ENCODE measurements at regions of chr3 and their contacts with region 1.

Region 1: GRCh38 chr3:128075516-128076482 is 23.6 kb downstream of the SEC61A1 start:
- DNase-seq: peak; percentile 85 to 92
- ATAC-seq: peak; percentile 84 to 95 (median 92)
- H3K4me3 ChIP-seq: peak overlapping the region; percentile 38 to 63 (median 56)
- H3K27ac ChIP-seq: peak overlapping the region in 9 of 10 donors; percentile 33 to 65 (median 55)
- H3K4me1 ChIP-seq: peaks cover 6 to 68% (median 46%) of the 10 kb centered on the region in 9 donors
- H3K27me3 ChIP-seq: no peaks in the 10 kb centered on the region
- CTCF ChIP-seq: peak; percentile 94 to 99 (median 97)

Region 2: DNA sequence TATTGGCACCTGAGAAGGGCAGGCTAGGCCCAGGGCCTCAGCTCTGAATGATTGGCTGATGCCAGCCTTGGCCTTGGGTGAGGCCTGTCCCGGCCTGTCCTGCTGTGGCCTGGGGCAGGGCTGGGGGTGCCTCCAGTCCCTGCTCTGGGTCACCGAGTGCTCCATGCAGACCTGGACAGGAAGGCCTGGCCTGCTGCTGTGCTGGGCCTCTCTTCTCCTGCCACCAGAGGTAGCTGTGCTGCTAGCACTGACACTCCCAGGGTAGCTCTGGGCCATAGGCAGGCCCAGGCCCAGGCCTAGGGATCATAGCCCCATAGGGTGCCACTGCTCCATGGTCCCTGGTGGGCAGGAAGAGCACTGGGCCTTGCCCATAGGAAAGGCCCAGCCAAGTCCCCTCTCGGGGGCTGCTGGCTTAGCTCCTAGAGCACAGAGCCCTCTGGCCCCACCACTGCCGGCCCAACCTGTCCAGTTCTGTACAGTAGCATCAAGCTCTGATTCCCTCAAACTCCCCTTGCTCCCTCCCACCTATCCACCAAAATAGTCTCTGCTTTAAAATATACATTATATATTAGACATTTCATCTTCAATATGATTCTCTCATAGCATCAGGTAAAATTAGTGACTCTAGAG is 384.9 kb before region 1 on chr3:
- intact Hi-C with region 1: loop called in 1 of 10 experiments (anchors 5 kb)
- DNase-seq: peak in 1 of 2 donors; percentile 38
- ATAC-seq: peak; percentile 40 to 72 (median 66)
- H3K4me3 ChIP-seq: no peak overlapping the region
- H3K27ac ChIP-seq: peak overlapping the region in 9 of 10 donors; percentile 28 to 70 (median 53)
- H3K4me1 ChIP-seq: peaks cover 5 to 52% (median 20%) of the 10 kb centered on the region in 9 donors
- H3K27me3 ChIP-seq: no peaks in the 10 kb centered on the region
- CTCF ChIP-seq: peak; percentile 14 to 66 (median 54)

Region 3: GRCh38 chr3:128133273-128134084 is 57.7 kb after region 1 on chr3:
- intact Hi-C with region 1: loop called in 3 of 10 experiments (anchors 5 to 10 kb)
- DNase-seq: no peak
- ATAC-seq: peak in 7 of 8 donors; percentile 53 to 76 (median 63)
- H3K4me3 ChIP-seq: no peak overlapping the region
- H3K27ac ChIP-seq: no peak overlapping the region
- H3K4me1 ChIP-seq: no peaks in the 10 kb centered on the region
- H3K27me3 ChIP-seq: peaks cover 0 to 14% (median 0%) of the 10 kb centered on the region in 7 donors
- CTCF ChIP-seq: peak; percentile 19 to 69 (median 61)